GM23248 (cell line): ENCODE measurements at regions of chr19 and their contacts with region 1.

Region 1: GRCh38 chr19:4732680-4733114 is 9.1 kb upstream of the DPP9 start:
- DNase-seq: peak; percentile 75
- H3K4me3 ChIP-seq: peak overlapping the region; percentile 18; the same call in 1 of the 2 replicates
- H3K27ac ChIP-seq: no peak overlapping the region
- H3K4me1 ChIP-seq: no peaks in the 10 kb centered on the region
- H3K27me3 ChIP-seq: no peaks in the 10 kb centered on the region

Region 2: DNA sequence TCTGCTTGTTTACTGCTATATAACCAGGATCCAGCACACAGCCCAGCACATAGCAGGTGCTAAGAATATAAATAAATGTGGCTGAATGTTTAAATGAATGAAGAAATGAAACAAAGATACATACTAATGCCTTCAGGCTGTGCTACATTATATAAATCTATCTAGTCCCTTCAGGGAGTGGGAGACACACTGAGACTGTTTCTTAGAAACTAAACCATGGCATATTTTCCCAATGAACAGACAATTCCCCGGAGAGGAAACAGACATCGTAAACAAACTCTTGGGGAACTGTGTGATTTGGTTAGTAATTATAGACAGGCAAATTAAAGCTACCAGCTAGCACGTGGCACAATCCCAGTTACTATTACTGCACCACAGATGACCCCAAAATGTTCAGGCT is 49.1 kb after region 1 on chr19:
- in situ Hi-C with region 1: loop called (anchors 10 kb)
- DNase-seq: peak; percentile 18
- H3K4me3 ChIP-seq: no peak overlapping the region
- H3K27ac ChIP-seq: no peak overlapping the region
- H3K4me1 ChIP-seq: no peaks in the 10 kb centered on the region
- H3K27me3 ChIP-seq: no peaks in the 10 kb centered on the region

Region 3: DNA sequence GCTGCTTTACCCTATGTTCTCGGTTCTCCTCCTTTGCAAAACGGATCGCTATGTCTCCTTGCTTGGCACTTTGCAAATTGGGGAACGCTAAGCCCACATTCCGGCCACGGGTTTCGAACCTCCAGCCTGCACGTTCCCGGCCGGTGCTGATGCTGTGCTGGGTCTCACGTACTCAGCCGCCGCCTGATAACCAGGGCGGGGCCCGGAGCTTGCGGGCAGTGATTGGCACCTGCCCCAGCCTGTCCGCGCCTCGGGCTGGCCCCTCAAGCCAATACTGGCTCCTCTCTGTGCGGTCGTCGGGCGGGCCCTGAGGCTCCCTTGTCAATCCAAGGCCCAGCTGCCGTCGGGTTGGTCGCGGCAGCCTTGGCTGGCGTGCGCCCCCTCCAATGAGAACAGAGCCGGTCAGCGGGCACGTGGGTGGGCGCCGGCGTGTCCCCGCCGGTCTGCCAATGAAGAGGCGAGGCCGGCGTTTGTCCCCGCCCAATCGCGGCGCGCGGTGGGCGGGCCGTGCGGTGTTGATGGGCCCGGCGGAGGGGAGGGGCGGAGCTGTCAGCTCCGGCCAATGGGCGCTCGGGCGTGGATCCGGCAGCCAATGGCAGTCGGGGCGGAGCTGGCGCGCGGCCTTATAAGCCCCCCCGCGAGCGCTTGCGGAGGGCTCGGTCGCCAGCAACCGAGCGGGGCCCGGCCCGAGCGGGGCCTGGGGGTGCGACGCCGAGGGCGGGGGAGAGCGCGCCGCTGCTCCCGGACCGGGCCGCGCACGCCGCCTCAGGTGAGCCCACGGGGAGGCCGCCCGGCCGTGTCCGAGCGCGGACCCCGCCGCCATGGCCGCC is 236.0 kb after region 1 on chr19 and contains the start of gene KDM4B:
- in situ Hi-C with region 1: no loop called
- DNase-seq: peak; percentile 100
- H3K4me3 ChIP-seq: peak within 1 kb of the TSS; percentile 97
- H3K27ac ChIP-seq: peak within 1 kb of the TSS; percentile 65
- H3K4me1 ChIP-seq: peaks cover 18% of the 10 kb centered on the region
- H3K27me3 ChIP-seq: no peaks in the 10 kb centered on the region
- total RNA-seq, gene KDM4B: 20.5 and 28.7 TPM in 2 replicates